Spleen (tissue), 13 donors: ENCODE measurements at regions of chr3 and their contacts with region 1.

Region 1: DNA sequence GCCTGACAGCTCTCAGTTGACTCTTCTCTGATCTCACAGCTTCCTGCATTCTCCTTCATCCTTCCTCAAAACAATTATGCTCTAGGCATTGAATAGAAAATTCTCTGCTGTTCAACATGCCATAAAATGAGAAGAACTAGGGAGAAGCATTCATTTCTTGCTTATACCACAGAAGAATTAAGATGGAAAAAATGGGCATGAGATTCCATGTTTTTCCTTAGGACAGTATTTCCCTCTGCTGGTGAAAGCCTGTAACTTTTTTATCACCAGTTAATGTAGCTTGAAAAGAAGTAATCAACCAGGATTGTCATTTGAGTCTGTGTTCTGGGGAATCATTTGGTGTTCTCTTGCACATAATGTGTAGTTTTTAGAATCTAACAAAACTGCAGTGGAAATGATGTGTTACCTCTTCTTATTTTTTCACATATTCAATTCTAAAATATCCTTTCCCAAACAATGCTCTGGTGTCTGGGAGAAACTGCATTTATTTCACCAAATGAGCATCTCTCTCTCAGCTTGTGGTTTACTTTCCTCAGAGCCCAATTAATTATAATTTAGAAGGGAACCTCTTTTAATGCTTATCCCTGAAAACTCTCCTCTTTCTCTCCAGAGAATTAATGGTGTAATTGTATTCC is 92.8 kb upstream of the DCBLD2 start:
- DNase-seq: no peak
- H3K4me3 ChIP-seq: no peak overlapping the region
- H3K27ac ChIP-seq: no peak overlapping the region
- H3K4me1 ChIP-seq: no peaks in the 10 kb centered on the region
- H3K27me3 ChIP-seq: peaks cover 0 to 4% (median 0%) of the 10 kb centered on the region in 7 donors
- CTCF ChIP-seq: peak in 6 of 11 experiments; percentile 11 to 48 (median 42)
- POLR2A ChIP-seq: no peak

Region 2: GRCh38 chr3:98602078-98602678 is 392.1 kb before region 1 on chr3:
- intact Hi-C with region 1: loop called (anchors 10 kb)
- DNase-seq: no peak
- H3K4me3 ChIP-seq: no peak overlapping the region
- H3K27ac ChIP-seq: no peak overlapping the region
- H3K4me1 ChIP-seq: peaks cover 0 to 2% (median 0%) of the 10 kb centered on the region in 6 donors
- H3K27me3 ChIP-seq: no peaks in the 10 kb centered on the region
- CTCF ChIP-seq: peak in 7 of 11 experiments; percentile 41 to 62 (median 52)
- POLR2A ChIP-seq: no peak

Region 3: GRCh38 chr3:98812851-98813374 is 181.3 kb before region 1 on chr3:
- intact Hi-C with region 1: loop called (anchors 2 kb)
- DNase-seq: no peak
- H3K4me3 ChIP-seq: no peak overlapping the region
- H3K27ac ChIP-seq: no peak overlapping the region
- H3K4me1 ChIP-seq: no peaks in the 10 kb centered on the region
- H3K27me3 ChIP-seq: no peaks in the 10 kb centered on the region
- CTCF ChIP-seq: peak in 10 of 11 experiments; percentile 10 to 73 (median 58)
- POLR2A ChIP-seq: no peak